ENCODE measurements at regions of chr3 and their contacts with region 1.

Region 1: DNA sequence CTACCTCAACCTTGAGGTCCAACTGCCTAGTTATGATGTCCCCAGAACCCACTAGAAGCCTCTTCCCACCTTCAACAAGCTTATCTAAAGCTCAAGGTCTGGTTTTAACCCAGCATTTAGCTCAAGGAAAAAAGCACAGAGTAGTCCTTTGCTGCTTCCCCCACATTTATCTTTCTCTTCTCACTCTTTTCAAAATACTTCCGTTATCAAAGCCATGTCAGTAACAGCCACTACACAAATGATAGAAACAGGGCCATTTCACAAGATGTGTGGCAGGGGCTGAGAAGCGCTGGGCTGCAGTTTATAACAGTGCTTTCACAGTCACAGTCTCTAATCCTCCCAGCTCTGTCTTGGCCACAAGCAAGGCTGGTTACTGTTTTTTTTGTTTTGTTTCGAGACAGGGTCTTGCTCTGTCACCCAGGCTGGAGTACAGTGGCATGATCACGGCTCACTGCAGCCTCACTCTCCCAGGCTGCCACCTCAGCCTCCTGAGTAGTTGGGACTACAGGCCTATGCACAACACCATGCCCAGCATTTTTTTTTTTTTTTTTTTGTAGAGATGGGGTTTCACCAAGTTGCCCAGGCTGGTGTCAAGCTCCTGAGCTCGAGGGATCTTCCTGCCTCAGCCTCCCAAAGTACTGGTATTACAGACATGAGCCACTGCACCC is 218.8 kb downstream of the OSBPL10 start:
- DNase-seq: no peak
- ATAC-seq: no peak
- H3K4me3 ChIP-seq: no peak overlapping the region
- H3K4me3 Mint-ChIP-seq: no peak overlapping the region
- H3K27ac ChIP-seq: no peak overlapping the region
- H3K27ac Mint-ChIP-seq: no peak overlapping the region
- H3K4me1 ChIP-seq: no peaks in the 10 kb centered on the region
- H3K4me1 Mint-ChIP-seq: no peaks in the 10 kb centered on the region
- H3K27me3 ChIP-seq: no peaks in the 10 kb centered on the region
- H3K27me3 Mint-ChIP-seq: no peaks in the 10 kb centered on the region
- CTCF ChIP-seq: no peak

Region 2: DNA sequence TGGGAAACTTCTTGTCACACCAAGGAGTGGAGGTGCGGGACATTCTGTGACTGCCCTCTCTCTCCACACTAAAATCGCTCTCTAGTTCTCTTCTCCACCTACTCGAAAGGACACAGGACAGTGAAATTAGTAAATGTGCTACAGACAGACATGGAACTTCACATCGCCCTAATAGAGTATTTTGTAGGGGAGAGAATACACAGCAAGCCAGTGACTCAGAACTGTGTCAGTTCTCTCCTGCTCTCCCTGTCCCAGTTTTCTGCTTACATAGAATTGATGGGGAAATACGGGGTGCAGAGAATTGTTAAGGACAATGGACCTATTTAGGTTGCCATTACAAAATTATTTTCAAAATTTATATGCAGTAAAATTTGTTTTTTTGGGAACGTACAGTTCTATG is 708.2 kb before region 1 on chr3:
- CTCF ChIA-PET with region 1: no interaction called
- POLR2A ChIA-PET with region 1: no interaction called
- intact Hi-C with region 1: no loop called
- DNase-seq: no peak
- ATAC-seq: no peak
- H3K4me3 ChIP-seq: no peak overlapping the region
- H3K4me3 Mint-ChIP-seq: no peak overlapping the region
- H3K27ac ChIP-seq: no peak overlapping the region
- H3K27ac Mint-ChIP-seq: no peak overlapping the region
- H3K4me1 ChIP-seq: no peaks in the 10 kb centered on the region
- H3K4me1 Mint-ChIP-seq: no peaks in the 10 kb centered on the region
- H3K27me3 ChIP-seq: no peaks in the 10 kb centered on the region
- H3K27me3 Mint-ChIP-seq: no peaks in the 10 kb centered on the region
- CTCF ChIP-seq: no peak

Region 3: GRCh38 chr3:31544634-31545033 is 217.6 kb before region 1 on chr3:
- CTCF ChIA-PET with region 1: no interaction called
- POLR2A ChIA-PET with region 1: no interaction called
- intact Hi-C with region 1: loop called in 1 of 2 experiments (anchors 1 kb)
- DNase-seq: no peak
- ATAC-seq: no peak
- H3K4me3 ChIP-seq: no peak overlapping the region
- H3K4me3 Mint-ChIP-seq: peak overlapping the region; percentile 9
- H3K27ac ChIP-seq: no peak overlapping the region
- H3K27ac Mint-ChIP-seq: peak overlapping the region; percentile 21
- H3K4me1 ChIP-seq: peaks cover 66% of the 10 kb centered on the region
- H3K4me1 Mint-ChIP-seq: peaks cover 86% of the 10 kb centered on the region
- H3K27me3 ChIP-seq: no peaks in the 10 kb centered on the region
- H3K27me3 Mint-ChIP-seq: no peaks in the 10 kb centered on the region
- CTCF ChIP-seq: no peak

Measured in CD8-positive, alpha-beta T cell (primary cell).